CD4-positive, alpha-beta T cell (primary cell): ENCODE measurements at regions of chr15 and their contacts with region 1.

Region 1: GRCh38 chr15:99755692-99756409 is 22.6 kb upstream of the LYSMD4 start:
- DNase-seq: peak in 7 of 14 experiments; percentile 12 to 78 (median 51)
- ATAC-seq: peak; percentile 85
- H3K4me3 ChIP-seq: no peak overlapping the region
- H3K4me3 Mint-ChIP-seq: no peak overlapping the region
- H3K27ac ChIP-seq: no peak overlapping the region
- H3K27ac Mint-ChIP-seq: no peak overlapping the region
- H3K4me1 ChIP-seq: peaks cover 4% of the 10 kb centered on the region
- H3K4me1 Mint-ChIP-seq: peaks cover 7% of the 10 kb centered on the region
- H3K27me3 ChIP-seq: no peaks in the 10 kb centered on the region
- H3K27me3 Mint-ChIP-seq: no peaks in the 10 kb centered on the region
- CTCF ChIP-seq: peak; percentile 91

Region 2: GRCh38 chr15:99104788-99105513 is 650.9 kb before region 1 on chr15 and contains the start of gene SYNM:
- CTCF ChIA-PET with region 1: no interaction called
- POLR2A ChIA-PET with region 1: no interaction called
- intact Hi-C with region 1: loop called in 1 of 2 experiments (anchors 5 kb)
- DNase-seq: peak in 6 of 14 experiments; percentile 3 to 60 (median 20)
- ATAC-seq: no peak
- H3K4me3 ChIP-seq: peak within 1 kb of the TSS; percentile 30
- H3K4me3 Mint-ChIP-seq: no peak within 1 kb of the TSS
- H3K27ac ChIP-seq: no peak within 1 kb of the TSS
- H3K27ac Mint-ChIP-seq: no peak within 1 kb of the TSS
- H3K4me1 ChIP-seq: peaks cover 21% of the 10 kb centered on the region
- H3K4me1 Mint-ChIP-seq: peaks cover 11% of the 10 kb centered on the region
- H3K27me3 ChIP-seq: peaks cover 20 to 48% of the 10 kb centered on the region in 2 experiments
- H3K27me3 Mint-ChIP-seq: peaks cover 46% of the 10 kb centered on the region
- CTCF ChIP-seq: no peak
- total RNA-seq, gene SYNM: 0.11 TPM

Region 3: GRCh38 chr15:99275525-99276128 is 480.2 kb before region 1 on chr15:
- CTCF ChIA-PET with region 1: interaction called, 7 read pairs
- POLR2A ChIA-PET with region 1: no interaction called
- intact Hi-C with region 1: loop called (anchors 1 kb)
- DNase-seq: no peak
- ATAC-seq: no peak
- H3K4me3 ChIP-seq: no peak overlapping the region
- H3K4me3 Mint-ChIP-seq: no peak overlapping the region
- H3K27ac ChIP-seq: no peak overlapping the region
- H3K27ac Mint-ChIP-seq: no peak overlapping the region
- H3K4me1 ChIP-seq: no peaks in the 10 kb centered on the region
- H3K4me1 Mint-ChIP-seq: peaks cover 29% of the 10 kb centered on the region
- H3K27me3 ChIP-seq: no peaks in the 10 kb centered on the region
- H3K27me3 Mint-ChIP-seq: no peaks in the 10 kb centered on the region
- CTCF ChIP-seq: no peak

Region 4: GRCh38 chr15:99282121-99282520 is 473.7 kb before region 1 on chr15:
- CTCF ChIA-PET with region 1: no interaction called
- POLR2A ChIA-PET with region 1: no interaction called
- intact Hi-C with region 1: loop called in 1 of 2 experiments (anchors 1 kb)
- DNase-seq: no peak
- ATAC-seq: no peak
- H3K4me3 ChIP-seq: no peak overlapping the region
- H3K4me3 Mint-ChIP-seq: no peak overlapping the region
- H3K27ac ChIP-seq: no peak overlapping the region
- H3K27ac Mint-ChIP-seq: no peak overlapping the region
- H3K4me1 ChIP-seq: no peaks in the 10 kb centered on the region
- H3K4me1 Mint-ChIP-seq: peaks cover 28% of the 10 kb centered on the region
- H3K27me3 ChIP-seq: no peaks in the 10 kb centered on the region
- H3K27me3 Mint-ChIP-seq: no peaks in the 10 kb centered on the region
- CTCF ChIP-seq: no peak

Region 5: DNA sequence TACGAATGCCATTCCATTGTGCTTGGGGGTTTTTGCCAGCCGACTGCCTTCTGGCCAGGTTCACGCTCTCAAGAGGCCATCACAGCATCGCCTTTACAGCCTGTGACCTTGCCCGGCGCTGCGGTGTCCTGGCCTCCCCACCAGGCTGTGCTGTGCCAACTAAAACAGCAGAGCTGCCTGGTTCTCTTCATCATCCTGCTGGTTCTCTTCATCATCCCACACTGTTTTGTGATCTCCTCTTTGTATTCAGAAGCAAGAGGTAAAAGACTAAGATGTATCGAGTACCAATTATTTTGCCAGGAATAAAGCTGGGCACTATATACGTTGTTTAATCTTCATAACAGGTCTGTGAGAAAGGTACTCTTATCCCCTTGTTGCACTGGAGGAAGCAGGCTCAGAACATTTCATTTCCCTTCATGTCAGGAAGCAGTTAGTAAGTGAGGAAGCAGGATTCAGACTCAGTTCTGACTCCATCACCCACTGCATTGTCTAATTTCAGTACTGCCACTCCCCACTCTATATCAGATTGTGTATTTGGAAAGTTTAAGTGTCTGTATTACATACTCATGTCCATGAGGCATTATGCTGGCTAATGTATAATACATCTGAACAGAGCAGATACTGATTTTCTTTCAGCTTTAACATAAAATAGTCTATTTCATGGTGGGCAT is 411.8 kb before region 1 on chr15:
- CTCF ChIA-PET with region 1: no interaction called
- POLR2A ChIA-PET with region 1: no interaction called
- intact Hi-C with region 1: loop called in 1 of 2 experiments (anchors 2 kb)
- DNase-seq: peak; percentile 33 to 70 (median 50)
- ATAC-seq: peak; percentile 83
- H3K4me3 ChIP-seq: no peak overlapping the region
- H3K4me3 Mint-ChIP-seq: no peak overlapping the region
- H3K27ac ChIP-seq: no peak overlapping the region
- H3K27ac Mint-ChIP-seq: no peak overlapping the region
- H3K4me1 ChIP-seq: no peaks in the 10 kb centered on the region
- H3K4me1 Mint-ChIP-seq: no peaks in the 10 kb centered on the region
- H3K27me3 ChIP-seq: no peaks in the 10 kb centered on the region
- H3K27me3 Mint-ChIP-seq: no peaks in the 10 kb centered on the region
- CTCF ChIP-seq: peak; percentile 74

Region 6: DNA sequence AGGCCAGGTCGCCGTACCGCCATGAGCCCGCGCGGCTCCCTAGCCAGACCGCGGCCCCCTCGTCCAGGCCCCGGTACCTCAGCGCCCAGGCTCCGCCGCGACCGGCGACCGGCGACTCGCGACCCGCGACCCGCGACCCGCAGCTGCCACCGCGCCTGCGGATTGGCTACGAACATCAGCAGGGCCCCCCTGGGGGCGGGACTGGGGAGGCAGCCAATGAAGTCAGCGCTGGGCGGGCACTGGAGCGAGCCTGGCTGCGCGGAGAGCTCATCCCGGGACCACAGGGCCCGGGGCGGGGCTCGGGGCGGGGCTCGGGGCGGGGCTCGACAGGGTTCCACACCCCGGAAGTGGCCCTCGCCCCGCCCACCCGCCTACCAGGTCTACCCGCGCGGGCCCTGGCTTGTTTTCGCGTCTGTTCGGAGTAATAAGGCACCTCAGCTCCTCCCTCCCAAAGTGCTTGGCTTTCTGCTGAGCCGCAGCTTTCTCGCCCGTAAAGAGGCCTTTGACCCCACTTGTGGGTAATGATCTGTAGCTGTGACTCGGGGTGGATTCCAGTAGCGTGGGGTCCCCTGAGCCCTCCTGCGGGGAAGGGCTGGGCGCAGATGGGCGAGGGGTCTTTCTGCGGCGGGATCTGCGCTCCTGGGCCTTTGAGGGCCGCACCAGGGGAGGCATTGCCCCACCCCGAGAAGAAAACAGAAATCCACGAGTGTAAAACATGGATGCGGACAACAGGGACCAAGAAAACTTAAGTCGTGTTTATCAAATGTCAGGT is 22.4 kb before region 1 on chr15 and contains the start of gene LYSMD4:
- CTCF ChIA-PET with region 1: interaction called, 4 read pairs
- POLR2A ChIA-PET with region 1: interaction called, 3 read pairs
- intact Hi-C with region 1: loop called (anchors 2 kb)
- DNase-seq: peak; percentile 97 to 99 (median 98)
- ATAC-seq: peak; percentile 98
- H3K4me3 ChIP-seq: peak within 1 kb of the TSS; percentile 80
- H3K4me3 Mint-ChIP-seq: peak within 1 kb of the TSS; percentile 94
- H3K27ac ChIP-seq: peak within 1 kb of the TSS; percentile 81 to 85
- H3K27ac Mint-ChIP-seq: peak within 1 kb of the TSS; percentile 94
- H3K4me1 ChIP-seq: peaks cover 16% of the 10 kb centered on the region
- H3K4me1 Mint-ChIP-seq: peaks cover 28% of the 10 kb centered on the region
- H3K27me3 ChIP-seq: no peaks in the 10 kb centered on the region
- H3K27me3 Mint-ChIP-seq: no peaks in the 10 kb centered on the region
- CTCF ChIP-seq: no peak
- total RNA-seq, gene LYSMD4: 12.9 to 13.0 TPM

Region 7: DNA sequence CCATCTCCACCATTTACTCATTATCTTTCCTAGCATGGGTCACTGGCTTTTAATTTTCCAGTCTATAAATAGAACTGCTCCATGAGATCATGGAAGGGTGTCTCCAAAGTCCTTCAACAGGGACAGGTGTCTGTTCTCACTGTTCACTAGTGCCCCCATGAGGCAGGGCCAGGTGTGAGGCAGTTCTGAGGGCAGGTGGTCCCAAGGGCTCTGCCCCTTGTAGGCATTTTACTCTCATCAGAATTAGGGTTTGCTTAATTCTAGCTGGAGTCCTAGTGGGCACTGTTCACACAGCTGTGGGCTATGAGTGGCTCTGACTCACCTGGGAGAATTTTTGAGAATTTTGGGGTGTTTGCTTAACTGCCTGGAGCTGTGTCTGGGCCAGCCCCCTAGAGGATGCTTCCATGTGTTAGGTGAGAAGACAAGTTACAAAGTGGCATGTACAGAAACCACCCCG is 225.4 kb after region 1 on chr15:
- CTCF ChIA-PET with region 1: no interaction called
- POLR2A ChIA-PET with region 1: no interaction called
- intact Hi-C with region 1: no loop called
- DNase-seq: no peak
- ATAC-seq: no peak
- H3K4me3 ChIP-seq: no peak overlapping the region
- H3K4me3 Mint-ChIP-seq: no peak overlapping the region
- H3K27ac ChIP-seq: no peak overlapping the region
- H3K27ac Mint-ChIP-seq: no peak overlapping the region
- H3K4me1 ChIP-seq: no peaks in the 10 kb centered on the region
- H3K4me1 Mint-ChIP-seq: no peaks in the 10 kb centered on the region
- H3K27me3 ChIP-seq: no peaks in the 10 kb centered on the region
- H3K27me3 Mint-ChIP-seq: no peaks in the 10 kb centered on the region
- CTCF ChIP-seq: no peak